ENCODE measurements at regions of chr1 and their contacts with region 1.

Region 1: GRCh38 chr1:113904674-113905434 is at the starts of genes AP4B1 and DCLRE1B:
- DNase-seq: peak; percentile 95 to 100 (median 97)

Region 2: GRCh38 chr1:113835642-113836307 is 69.1 kb before region 1 on chr1:
- intact Hi-C with region 1: loop called (anchors 2 kb)
- DNase-seq: no peak

Region 3: GRCh38 chr1:113849060-113849459 is 55.8 kb before region 1 on chr1:
- intact Hi-C with region 1: no loop called
- DNase-seq: no peak

Region 4: GRCh38 chr1:113928941-113929749 is 24.3 kb after region 1 on chr1 and contains the start of gene HIPK1:
- intact Hi-C with region 1: loop called (anchors 1 kb)
- DNase-seq: peak; percentile 90 to 99 (median 94)

Region 5: DNA sequence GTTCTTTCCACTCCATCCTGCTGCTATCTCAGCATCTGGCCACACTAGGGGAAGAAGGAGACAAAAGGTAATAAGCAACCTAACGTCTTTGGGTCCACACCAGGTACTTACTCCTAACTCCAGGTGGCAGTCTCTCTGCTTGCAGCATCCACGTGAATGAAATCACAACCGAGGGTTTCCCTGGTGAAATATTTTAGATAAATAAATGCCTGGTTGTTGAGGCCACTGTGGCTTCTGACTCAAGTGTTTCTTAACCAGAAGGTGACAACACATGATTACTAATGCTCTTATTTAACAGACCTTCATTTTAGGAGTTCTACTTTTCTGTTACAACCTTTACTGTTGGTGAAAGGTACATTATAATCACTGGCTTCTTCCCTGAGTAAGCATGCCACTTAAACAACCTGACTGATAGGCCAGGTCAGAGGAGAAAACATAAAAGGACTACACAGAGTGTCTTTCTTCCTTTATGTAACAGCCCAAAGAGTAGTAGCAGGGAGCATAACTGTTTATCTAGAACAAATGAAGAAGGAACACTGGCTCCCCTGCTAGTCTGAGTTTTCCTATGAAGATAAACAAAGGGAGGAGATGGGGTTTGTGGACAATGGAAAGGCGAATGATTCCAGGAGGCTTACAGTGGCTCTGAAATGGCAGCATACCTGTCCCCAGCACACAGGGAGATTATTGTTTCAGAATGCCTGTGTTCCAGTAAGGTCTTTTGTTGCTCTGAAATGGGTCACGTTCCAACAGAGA is 188.9 kb after region 1 on chr1:
- intact Hi-C with region 1: no loop called
- DNase-seq: no peak

Region 6: DNA sequence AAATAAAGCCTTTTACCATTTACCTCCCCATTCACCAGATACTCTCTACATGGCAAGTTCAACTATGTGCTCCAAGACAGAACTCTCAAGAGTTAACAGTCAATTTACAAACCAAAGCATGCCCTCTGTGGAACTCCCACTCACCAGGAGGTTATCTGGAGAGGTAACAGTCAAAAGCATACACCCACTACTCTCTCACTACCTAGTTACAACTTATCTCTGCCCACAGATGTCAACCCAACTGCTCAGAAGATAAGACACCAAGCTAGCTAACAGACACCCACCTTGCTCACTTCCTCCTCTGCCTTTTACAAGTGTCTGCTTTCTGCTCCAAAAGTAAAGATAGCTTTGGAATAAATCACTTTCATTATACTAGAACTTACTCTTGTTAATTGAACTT is 475.1 kb after region 1 on chr1:
- intact Hi-C with region 1: no loop called
- DNase-seq: no peak

Region 7: DNA sequence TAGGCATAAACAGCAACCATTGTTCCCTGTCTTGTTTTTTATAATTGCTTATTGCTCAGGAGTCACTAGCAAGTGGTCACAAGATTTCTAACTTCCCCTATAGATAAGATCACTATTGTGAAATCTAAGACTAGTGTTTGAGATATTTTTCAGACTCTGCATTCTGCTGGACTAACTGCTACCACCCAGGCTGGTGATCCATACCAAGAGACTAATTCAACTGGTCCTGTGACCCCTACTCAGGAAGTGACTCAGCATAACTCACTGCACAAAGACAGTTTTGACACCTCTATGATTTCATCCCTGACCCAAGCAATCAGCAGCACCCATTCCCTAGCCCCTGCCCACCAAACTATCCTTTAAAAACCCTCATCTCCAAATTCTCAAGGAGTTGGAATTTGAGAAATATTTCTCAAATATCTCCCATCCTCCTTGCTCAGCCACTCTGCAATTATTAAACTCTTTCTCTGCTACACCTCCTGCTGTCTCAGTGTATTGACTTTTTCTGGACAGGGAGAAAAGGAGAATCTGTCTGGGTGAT is 553.5 kb after region 1 on chr1:
- intact Hi-C with region 1: no loop called
- DNase-seq: no peak